ENCODE measurements at regions of chr10 and their contacts with region 1.

Region 1: DNA sequence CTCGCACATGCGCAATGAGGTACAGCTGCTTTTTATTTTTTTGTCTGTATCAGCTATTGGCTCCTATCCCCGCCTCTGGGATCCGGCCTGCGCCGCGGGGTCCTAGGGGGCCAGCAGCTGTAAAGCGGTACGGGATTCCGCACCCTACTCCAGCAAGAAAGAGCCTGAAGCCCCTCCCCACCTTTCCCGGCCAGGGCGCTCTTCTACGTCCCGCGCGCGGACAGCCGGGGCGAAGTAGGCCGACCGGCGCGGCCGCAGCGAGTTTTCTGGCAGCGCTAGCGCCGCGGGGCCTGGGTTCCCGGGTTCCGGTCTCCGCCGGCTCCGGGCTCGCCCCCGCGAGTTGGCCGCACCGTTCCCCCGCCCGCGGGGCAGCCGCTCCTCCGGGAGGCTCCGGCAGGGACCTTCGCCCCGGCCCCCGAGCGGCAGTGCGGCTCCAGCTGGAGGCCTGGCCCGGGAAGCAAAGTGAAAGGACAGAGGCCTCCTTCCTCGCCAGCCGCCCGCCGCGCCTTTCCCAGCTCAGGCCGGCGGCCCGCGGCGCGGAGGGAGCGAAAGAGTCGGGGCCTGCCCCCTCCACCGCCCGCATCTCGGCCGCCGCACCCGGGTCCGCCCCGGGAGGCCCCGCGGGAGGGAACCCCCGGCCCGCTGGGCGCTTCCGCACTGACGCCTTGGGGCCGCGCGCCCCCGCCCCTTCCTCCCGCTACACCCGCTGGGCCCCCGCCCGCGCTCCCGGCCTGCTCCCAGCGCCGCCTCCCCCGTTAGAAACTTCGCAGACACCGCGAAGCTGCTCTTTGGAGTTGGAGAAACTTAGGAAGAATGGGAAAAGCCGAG is 4.7 kb upstream of the SPAG6 start:
- DNase-seq: peak; percentile 91
- H3K4me3 Mint-ChIP-seq: peak overlapping the region; percentile 77
- H3K27ac Mint-ChIP-seq: peak overlapping the region; percentile 92
- H3K4me1 Mint-ChIP-seq: peaks cover 40% of the 10 kb centered on the region
- H3K27me3 Mint-ChIP-seq: peaks cover 68% of the 10 kb centered on the region

Region 2: GRCh38 chr10:21173812-21174714 is 1166.5 kb before region 1 on chr10:
- intact Hi-C with region 1: loop called (anchors 10 kb)
- DNase-seq: peak; percentile 63
- H3K4me3 Mint-ChIP-seq: peak overlapping the region; percentile 64
- H3K27ac Mint-ChIP-seq: no peak overlapping the region
- H3K4me1 Mint-ChIP-seq: peaks cover 3% of the 10 kb centered on the region
- H3K27me3 Mint-ChIP-seq: peaks cover 50% of the 10 kb centered on the region

Region 3: GRCh38 chr10:21516242-21517131 is 824.1 kb before region 1 on chr10:
- intact Hi-C with region 1: loop called (anchors 5 kb)
- DNase-seq: peak; percentile 86
- H3K4me3 Mint-ChIP-seq: peak overlapping the region; percentile 87
- H3K27ac Mint-ChIP-seq: no peak overlapping the region
- H3K4me1 Mint-ChIP-seq: peaks cover 40% of the 10 kb centered on the region
- H3K27me3 Mint-ChIP-seq: peaks cover 78% of the 10 kb centered on the region

Region 4: DNA sequence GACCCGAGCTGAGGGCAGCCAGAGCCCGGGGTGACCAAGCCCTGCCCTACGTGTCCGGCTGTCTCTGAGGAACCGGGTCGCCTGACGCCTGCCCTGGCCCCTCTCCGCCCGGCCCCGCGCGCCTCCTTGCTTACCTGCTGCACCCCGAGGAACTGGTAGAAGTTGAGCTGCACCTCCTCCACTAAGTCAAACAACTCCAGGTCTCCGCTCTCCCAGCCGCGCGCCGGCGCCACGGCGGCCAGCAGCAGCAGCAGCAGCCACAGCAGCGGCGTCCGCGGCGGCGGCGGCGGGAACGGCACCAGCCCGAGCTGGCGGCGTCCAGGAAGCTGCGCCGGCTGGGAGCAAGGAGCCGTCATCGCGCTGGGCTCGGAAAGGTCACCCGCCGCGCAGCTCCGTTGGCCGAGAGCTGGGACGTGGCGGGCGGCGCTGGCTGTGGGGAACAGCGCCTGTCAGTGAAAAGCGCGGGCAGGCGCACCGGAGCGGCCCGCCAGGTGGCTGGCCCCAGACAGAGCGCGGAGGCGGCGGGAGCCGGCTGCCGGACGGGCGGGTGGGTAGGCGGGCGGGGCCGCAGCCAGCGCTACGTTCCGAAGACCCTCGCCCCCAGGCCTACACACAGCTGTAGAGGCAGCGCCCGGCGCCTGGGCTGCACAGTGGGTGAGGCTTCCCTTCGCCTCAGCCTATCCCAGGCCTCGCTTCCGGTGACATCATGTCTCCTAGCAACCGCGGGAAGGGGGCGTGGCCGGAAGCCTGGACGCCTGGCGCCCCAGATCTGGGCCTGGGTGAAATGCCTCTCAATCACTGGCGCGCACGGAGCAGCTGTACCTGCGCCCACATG is 337.3 kb before region 1 on chr10 and contains the start of gene DNAJC1:
- intact Hi-C with region 1: loop called (anchors 1 kb)
- DNase-seq: peak; percentile 100
- H3K4me3 Mint-ChIP-seq: peak within 1 kb of the TSS; percentile 93
- H3K27ac Mint-ChIP-seq: peak within 1 kb of the TSS; percentile 96
- H3K4me1 Mint-ChIP-seq: peaks cover 26% of the 10 kb centered on the region
- H3K27me3 Mint-ChIP-seq: peaks cover 18% of the 10 kb centered on the region
- total RNA-seq, gene DNAJC1: 22.1 and 22.4 TPM in 2 replicates

Region 5: DNA sequence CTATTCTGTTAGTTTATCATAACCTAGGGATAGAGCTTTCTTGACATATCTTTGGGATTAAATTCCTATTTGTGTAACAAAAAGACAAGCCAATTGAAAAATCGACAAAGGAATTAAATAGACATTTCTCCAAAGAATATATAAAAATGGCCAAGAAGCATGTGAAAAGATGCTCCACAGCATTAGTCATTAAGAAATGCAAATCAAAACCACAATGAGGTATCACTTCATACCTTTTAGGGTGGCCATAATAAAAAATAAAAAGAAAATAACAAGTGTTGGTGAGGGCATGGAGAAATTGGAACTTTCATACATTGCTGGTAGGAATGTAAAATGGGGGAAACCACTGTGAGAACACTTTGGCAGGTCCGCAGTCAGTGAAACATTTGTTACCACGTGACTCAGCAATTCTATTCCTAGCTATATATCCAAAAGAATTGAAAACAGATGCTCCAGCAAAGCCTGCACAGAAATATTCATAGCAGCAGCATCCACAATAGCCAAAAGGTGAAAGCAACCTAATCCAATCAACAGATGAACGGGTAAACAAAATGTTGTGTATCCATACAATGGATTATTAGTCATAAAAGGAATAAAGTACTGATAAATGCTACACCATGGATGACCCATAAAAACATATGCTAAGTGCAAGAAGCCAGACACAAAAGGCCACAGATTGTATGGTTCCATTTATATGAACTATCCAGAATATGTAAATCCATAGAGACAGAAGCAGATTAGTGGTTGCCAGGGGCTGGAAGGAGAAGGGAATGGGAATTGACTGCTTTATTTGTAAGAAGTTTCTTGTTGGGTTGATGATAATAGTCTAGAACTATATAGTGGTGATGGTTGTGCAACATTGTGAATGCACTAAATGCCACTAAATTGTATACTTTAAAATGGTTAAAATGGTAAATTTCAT is 25.3 kb after region 1 on chr10:
- intact Hi-C with region 1: loop called (anchors 2 kb)
- DNase-seq: no peak
- H3K4me3 Mint-ChIP-seq: no peak overlapping the region
- H3K27ac Mint-ChIP-seq: peak overlapping the region; percentile 67
- H3K4me1 Mint-ChIP-seq: peaks cover 36% of the 10 kb centered on the region
- H3K27me3 Mint-ChIP-seq: no peaks in the 10 kb centered on the region

Region 6: DNA sequence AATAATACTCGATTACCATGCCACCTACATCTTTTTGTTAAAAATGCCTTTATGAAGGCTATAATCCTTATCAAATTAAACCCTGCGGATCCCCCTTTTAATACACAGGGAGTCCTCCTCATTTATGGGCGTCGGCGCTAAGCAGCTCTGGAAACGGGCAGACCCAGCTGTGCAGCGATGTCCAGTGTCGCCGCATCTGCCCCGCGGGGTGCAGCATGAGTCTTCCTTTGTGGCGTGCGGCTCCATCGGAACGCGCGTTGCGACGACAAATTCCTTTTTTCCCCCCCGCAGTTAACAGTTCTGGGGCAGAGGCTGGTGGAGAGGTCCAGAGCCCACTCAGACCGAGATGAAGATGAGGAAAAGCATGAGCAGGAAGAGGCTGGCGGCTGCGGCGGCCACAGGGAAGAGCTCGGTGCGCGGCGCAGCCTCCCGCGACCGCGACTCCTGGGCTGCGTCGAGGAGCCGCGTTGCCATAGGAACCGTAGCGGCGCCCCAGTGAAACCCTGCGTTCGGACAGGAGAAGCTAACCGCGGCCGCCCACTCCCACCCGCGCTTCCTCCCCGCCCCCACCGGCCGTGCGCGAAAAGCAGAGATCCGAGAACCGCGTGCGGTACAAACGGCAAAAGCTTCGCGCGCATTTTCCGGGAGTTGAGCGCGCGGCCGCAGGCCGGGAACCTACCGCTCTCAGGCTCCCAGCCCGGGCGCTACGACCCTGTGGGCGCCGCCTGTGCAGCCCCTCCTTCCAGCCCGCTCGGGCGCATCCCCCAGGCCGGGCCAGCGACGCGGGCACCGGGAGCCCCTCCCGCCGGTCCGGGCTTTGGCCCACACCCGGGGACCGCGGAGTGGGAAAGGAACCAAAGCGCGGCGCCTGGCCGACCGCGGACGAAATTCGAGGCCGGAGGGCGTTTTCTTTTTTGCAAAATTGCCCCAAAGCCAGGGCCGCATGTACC is 135.3 kb after region 1 on chr10:
- intact Hi-C with region 1: loop called (anchors 1 kb)
- DNase-seq: peak; percentile 79
- H3K4me3 Mint-ChIP-seq: peak overlapping the region; percentile 86
- H3K27ac Mint-ChIP-seq: peak overlapping the region; percentile 86
- H3K4me1 Mint-ChIP-seq: peaks cover 11% of the 10 kb centered on the region
- H3K27me3 Mint-ChIP-seq: peaks cover 57% of the 10 kb centered on the region

Region 7: DNA sequence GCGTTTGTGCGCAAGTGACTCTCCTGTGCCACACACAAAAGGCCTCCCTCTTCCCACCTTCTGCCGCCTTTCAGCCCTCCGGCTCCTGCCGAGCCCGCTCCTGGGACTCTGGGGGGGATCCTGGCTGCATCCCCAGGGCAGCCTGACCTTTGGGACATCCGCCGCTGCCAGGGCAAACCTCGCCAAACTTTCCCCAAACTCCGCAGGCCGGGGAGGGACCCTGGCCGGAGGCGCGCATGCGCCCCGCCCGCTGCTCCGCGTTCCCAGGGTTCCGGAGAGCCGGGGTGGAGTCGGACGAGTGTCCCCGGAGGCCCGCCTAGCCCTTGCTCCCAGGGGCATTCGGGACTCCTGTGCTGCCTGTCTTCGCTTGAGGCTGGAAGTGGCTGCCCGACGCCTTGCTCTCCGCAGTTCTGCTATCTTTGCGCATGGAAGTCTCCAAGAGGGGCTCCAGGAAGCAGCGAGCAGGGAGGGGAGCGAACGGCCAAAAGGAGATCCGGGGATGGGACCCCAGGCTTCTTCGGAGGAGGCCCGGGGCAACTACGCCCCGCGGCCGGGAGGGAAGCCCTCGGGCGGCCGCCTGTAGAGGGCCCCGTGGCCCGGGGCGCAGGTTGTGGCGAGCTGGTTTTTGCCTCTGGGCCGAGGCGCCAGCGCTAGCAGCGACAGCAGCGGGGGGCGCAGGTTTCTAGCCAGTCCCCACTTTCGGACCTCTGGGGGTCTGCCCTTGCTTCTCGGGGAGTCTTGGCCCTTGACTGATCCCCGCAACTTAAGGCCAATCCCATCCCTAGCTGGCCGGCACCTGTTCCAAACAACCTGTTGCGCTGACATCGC is 858.6 kb after region 1 on chr10:
- intact Hi-C with region 1: loop called (anchors 5 kb)
- DNase-seq: no peak
- H3K4me3 Mint-ChIP-seq: no peak overlapping the region
- H3K27ac Mint-ChIP-seq: no peak overlapping the region
- H3K4me1 Mint-ChIP-seq: no peaks in the 10 kb centered on the region
- H3K27me3 Mint-ChIP-seq: peaks cover 81% of the 10 kb centered on the region

Measured in activated CD4-positive, alpha-beta T cell treated with anti-CD3 and anti-CD28 coated beads, Interleukin-2, amount 10 ng/mL, durations not matched to agents 24 days and 14 days (primary cell).